ENCODE measurements at regions of chr4 and their contacts with region 1.

Region 1: GRCh38 chr4:69689599-69689998 is 36.6 kb upstream of the UGT2A1 start:
- DNase-seq: peak in 2 of 9 experiments; percentile 43 to 62
- ATAC-seq: no peak
- H3K4me3 ChIP-seq: no peak overlapping the region
- H3K4me3 Mint-ChIP-seq: peak overlapping the region; percentile 41
- H3K27ac ChIP-seq: no peak overlapping the region
- H3K27ac Mint-ChIP-seq: no peak overlapping the region
- H3K4me1 ChIP-seq: no peaks in the 10 kb centered on the region
- H3K4me1 Mint-ChIP-seq: peaks cover 4% of the 10 kb centered on the region
- H3K27me3 ChIP-seq: no peaks in the 10 kb centered on the region
- H3K27me3 Mint-ChIP-seq: no peaks in the 10 kb centered on the region
- CTCF ChIP-seq: peak; percentile 83

Region 2: GRCh38 chr4:69701696-69702095 is 12.1 kb after region 1 on chr4:
- CTCF ChIA-PET with region 1: no interaction called
- POLR2A ChIA-PET with region 1: no interaction called
- intact Hi-C with region 1: no loop called
- DNase-seq: no peak
- ATAC-seq: no peak
- H3K4me3 ChIP-seq: no peak overlapping the region
- H3K4me3 Mint-ChIP-seq: no peak overlapping the region
- H3K27ac ChIP-seq: no peak overlapping the region
- H3K27ac Mint-ChIP-seq: no peak overlapping the region
- H3K4me1 ChIP-seq: no peaks in the 10 kb centered on the region
- H3K4me1 Mint-ChIP-seq: no peaks in the 10 kb centered on the region
- H3K27me3 ChIP-seq: no peaks in the 10 kb centered on the region
- H3K27me3 Mint-ChIP-seq: no peaks in the 10 kb centered on the region
- CTCF ChIP-seq: no peak

Region 3: DNA sequence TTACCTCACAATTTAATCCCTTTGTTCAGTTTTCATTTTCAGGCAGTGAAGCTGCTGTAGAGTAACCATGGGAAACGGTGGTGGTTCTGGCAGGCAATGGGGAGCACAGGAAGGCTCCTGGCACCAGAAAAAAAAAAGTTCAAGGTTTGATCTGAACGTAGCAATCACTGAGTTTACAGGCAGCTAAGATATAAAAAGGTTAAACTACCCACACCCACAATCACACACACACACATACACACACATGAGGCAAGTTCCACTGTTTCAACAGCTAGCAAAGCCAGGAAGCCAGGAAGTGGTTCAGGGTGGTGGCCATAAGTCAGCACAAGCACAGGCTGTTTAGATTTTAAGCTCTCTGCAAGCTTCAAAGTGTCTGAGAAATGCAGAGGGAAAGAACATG is 70.9 kb after region 1 on chr4 and contains the start of gene SULT1B1:
- CTCF ChIA-PET with region 1: interaction called, 7 read pairs
- POLR2A ChIA-PET with region 1: no interaction called
- intact Hi-C with region 1: loop called in 1 of 2 experiments (anchors 5 kb)
- DNase-seq: peak in 8 of 9 experiments; percentile 37 to 78 (median 56)
- ATAC-seq: peak; percentile 94
- H3K4me3 ChIP-seq: peak within 1 kb of the TSS; percentile 22 to 43
- H3K4me3 Mint-ChIP-seq: peak within 1 kb of the TSS; percentile 87
- H3K27ac ChIP-seq: peak within 1 kb of the TSS; percentile 34
- H3K27ac Mint-ChIP-seq: peak within 1 kb of the TSS; percentile 91
- H3K4me1 ChIP-seq: peaks cover 47% of the 10 kb centered on the region
- H3K4me1 Mint-ChIP-seq: peaks cover 68% of the 10 kb centered on the region
- H3K27me3 ChIP-seq: no peaks in the 10 kb centered on the region
- H3K27me3 Mint-ChIP-seq: no peaks in the 10 kb centered on the region
- CTCF ChIP-seq: no peak
- total RNA-seq, gene SULT1B1: 4.5 to 5.1 TPM

Region 4: DNA sequence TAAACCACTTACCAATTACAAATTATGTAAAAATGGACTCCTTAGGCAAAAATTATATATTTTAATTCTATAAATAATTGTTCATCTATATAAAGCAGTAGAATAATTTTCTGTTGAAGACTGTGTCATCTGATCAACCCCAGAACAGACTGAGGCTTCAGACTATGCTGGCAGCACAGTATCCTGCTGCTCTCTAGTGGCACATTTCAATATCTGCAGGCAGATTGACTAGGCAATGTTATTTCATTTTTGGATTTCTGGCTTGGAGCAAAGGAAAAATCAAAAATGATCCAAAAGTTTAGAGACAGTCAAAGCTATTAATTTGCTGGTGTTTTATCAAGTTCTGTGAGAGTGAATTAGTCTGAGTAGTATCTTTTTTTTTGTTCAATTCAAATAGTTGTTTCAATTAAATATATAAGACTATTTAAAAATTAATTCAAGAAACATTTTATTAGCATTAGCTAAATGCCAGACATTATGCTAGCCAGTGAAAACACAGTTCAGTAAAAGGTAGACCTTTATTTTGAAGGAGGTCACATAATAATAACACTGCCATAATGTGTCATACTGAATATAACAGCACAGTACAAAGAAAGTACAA is 191.7 kb after region 1 on chr4:
- CTCF ChIA-PET with region 1: interaction called, 20 read pairs
- POLR2A ChIA-PET with region 1: no interaction called
- intact Hi-C with region 1: loop called (anchors 1 kb)
- DNase-seq: peak in 4 of 9 experiments; percentile 13 to 57 (median 24)
- ATAC-seq: peak; percentile 78
- H3K4me3 ChIP-seq: no peak overlapping the region
- H3K4me3 Mint-ChIP-seq: no peak overlapping the region
- H3K27ac ChIP-seq: no peak overlapping the region
- H3K27ac Mint-ChIP-seq: no peak overlapping the region
- H3K4me1 ChIP-seq: no peaks in the 10 kb centered on the region
- H3K4me1 Mint-ChIP-seq: no peaks in the 10 kb centered on the region
- H3K27me3 ChIP-seq: no peaks in the 10 kb centered on the region
- H3K27me3 Mint-ChIP-seq: no peaks in the 10 kb centered on the region
- CTCF ChIP-seq: peak; percentile 90

Region 5: GRCh38 chr4:70473679-70474078 is 784.1 kb after region 1 on chr4:
- CTCF ChIA-PET with region 1: no interaction called
- POLR2A ChIA-PET with region 1: no interaction called
- intact Hi-C with region 1: no loop called
- DNase-seq: no peak
- ATAC-seq: no peak
- H3K4me3 ChIP-seq: no peak overlapping the region
- H3K4me3 Mint-ChIP-seq: no peak overlapping the region
- H3K27ac ChIP-seq: no peak overlapping the region
- H3K27ac Mint-ChIP-seq: no peak overlapping the region
- H3K4me1 ChIP-seq: no peaks in the 10 kb centered on the region
- H3K4me1 Mint-ChIP-seq: no peaks in the 10 kb centered on the region
- H3K27me3 ChIP-seq: no peaks in the 10 kb centered on the region
- H3K27me3 Mint-ChIP-seq: peaks cover 3% of the 10 kb centered on the region
- CTCF ChIP-seq: no peak

Region 6: DNA sequence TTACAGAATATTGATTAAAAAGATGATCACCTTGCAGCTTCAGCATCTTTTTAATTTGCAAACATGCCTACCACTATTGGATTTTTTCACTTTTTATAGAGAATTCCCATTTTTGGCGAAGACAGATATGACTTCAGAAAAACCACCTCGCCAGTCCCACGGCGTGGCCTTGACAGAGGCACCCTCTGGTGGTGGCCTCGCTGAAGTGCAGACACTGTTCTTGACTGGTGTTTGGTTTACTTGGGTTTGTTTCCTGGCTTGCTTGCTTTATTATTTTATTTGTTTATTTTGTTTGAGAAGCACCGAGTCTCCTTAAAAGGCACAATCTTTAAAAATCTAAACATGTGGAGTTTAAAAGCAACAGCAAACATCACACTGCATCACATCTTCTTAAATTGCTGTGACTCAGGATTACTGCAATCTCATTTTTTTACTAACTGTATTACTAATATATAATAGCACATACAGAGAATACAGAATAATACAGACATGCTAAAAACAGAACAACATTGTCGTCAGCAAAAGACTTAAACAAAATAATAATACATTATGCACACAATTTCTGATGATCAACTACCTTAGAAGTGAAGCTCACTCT is 815.7 kb after region 1 on chr4:
- CTCF ChIA-PET with region 1: no interaction called
- POLR2A ChIA-PET with region 1: no interaction called
- intact Hi-C with region 1: loop called in 1 of 2 experiments (anchors 1 kb)
- DNase-seq: peak; percentile 2 to 65 (median 48)
- ATAC-seq: peak; percentile 58
- H3K4me3 ChIP-seq: no peak overlapping the region
- H3K4me3 Mint-ChIP-seq: no peak overlapping the region
- H3K27ac ChIP-seq: no peak overlapping the region
- H3K27ac Mint-ChIP-seq: no peak overlapping the region
- H3K4me1 ChIP-seq: no peaks in the 10 kb centered on the region
- H3K4me1 Mint-ChIP-seq: no peaks in the 10 kb centered on the region
- H3K27me3 ChIP-seq: peaks cover 0 to 2% of the 10 kb centered on the region in 2 experiments
- H3K27me3 Mint-ChIP-seq: no peaks in the 10 kb centered on the region
- CTCF ChIP-seq: peak; percentile 80

Measured in CD8-positive, alpha-beta T cell (primary cell).